Spleen (tissue), 13 donors: ENCODE measurements at regions of chr15 and their contacts with region 1.

Region 1: GRCh38 chr15:50876989-50877360 is 31.5 kb upstream of the AP4E1 start:
- DNase-seq: no peak
- H3K4me3 ChIP-seq: peak overlapping the region in 6 of 8 donors; percentile 12 to 61 (median 24)
- H3K27ac ChIP-seq: peak overlapping the region in 2 of 8 donors; percentile 21 to 30
- H3K4me1 ChIP-seq: peaks cover 0 to 68% (median 36%) of the 10 kb centered on the region in 6 donors
- H3K27me3 ChIP-seq: no peaks in the 10 kb centered on the region
- CTCF ChIP-seq: peak; percentile 83 to 97 (median 94)
- POLR2A ChIP-seq: no peak

Region 2: GRCh38 chr15:50390554-50391287 is 486.3 kb before region 1 on chr15:
- intact Hi-C with region 1: no loop called
- DNase-seq: no peak
- H3K4me3 ChIP-seq: no peak overlapping the region
- H3K27ac ChIP-seq: no peak overlapping the region
- H3K4me1 ChIP-seq: peaks cover 0 to 6% (median 2%) of the 10 kb centered on the region in 6 donors
- H3K27me3 ChIP-seq: no peaks in the 10 kb centered on the region
- CTCF ChIP-seq: no peak
- POLR2A ChIP-seq: no peak

Region 3: DNA sequence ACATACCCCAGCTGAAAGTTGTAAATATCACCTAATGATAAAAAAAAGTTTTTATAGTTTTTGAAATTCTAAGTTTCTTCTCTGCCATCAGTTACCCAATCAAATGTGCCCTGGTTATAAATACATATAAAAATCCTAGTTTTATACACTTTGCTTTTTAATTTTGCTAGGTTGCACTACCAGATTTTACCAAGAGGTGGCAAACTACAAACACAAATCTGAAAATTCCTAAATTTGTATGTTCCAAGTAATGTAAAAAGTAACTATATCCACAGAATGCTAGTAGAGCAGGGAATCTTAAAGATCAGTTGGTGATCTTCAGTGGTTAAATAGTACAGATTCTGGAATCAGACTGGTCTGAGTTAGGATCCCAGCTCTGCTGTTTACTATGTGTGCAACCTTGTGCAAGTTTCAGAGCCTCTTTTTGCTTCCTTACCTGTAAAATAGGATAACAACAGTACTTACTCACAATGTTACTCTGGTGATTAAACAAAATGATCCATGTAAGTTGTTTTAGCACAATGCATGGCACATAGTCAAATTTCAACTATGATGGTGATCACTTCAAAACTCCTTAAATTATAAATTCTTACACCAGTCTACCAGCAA is 201.3 kb before region 1 on chr15:
- intact Hi-C with region 1: loop called (anchors 5 kb)
- DNase-seq: no peak
- H3K4me3 ChIP-seq: no peak overlapping the region
- H3K27ac ChIP-seq: peak overlapping the region in 1 of 8 donors; percentile 4
- H3K4me1 ChIP-seq: peaks cover 0 to 74% (median 27%) of the 10 kb centered on the region in 6 donors
- H3K27me3 ChIP-seq: no peaks in the 10 kb centered on the region
- CTCF ChIP-seq: peak; percentile 62 to 82 (median 69)
- POLR2A ChIP-seq: no peak

Region 4: DNA sequence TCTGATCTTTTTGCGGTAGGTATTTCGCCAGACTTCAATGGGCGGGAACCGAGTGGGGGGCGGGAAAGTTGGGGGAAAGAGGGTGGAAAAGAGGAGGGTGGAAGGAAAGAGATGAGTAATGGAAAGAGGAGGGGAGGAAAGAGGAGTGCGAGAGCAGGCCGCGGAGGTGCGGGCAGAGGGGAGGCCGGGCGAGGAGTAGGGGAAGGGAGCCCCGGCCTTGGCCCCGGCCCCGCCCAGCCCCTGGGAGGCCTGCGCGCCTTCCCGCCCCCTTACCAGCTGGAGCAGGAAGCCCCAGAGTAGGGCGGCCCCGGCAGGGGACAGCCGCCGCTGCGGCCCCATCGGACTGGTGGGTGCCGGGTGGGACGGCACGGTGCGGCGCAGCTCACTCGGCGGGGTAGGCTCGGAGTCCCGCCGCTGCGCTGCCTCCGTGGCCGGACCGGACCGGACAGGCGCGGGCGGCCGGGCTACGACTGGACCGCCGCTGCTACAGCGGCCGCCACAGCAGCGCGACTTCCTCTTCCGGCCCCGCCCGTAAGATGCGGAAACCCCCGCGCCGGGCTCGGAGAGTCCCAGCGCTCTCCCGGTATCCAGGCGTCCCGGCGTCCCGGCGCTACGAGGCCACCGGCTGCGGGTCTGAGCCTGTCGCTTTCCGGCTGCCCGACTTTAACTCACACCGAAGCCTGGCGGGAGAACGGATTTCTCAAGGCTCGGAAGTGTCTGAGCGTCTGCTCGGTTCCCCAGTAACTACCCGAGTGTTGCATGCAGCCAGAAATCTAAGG is 111.6 kb before region 1 on chr15 and contains the start of gene SPPL2A:
- intact Hi-C with region 1: loop called (anchors 10 kb)
- DNase-seq: peak; percentile 97
- H3K4me3 ChIP-seq: peak within 1 kb of the TSS; percentile 58 to 95 (median 84)
- H3K27ac ChIP-seq: peak within 1 kb of the TSS; percentile 96 to 99 (median 98)
- H3K4me1 ChIP-seq: peaks cover 11 to 59% (median 35%) of the 10 kb centered on the region in 6 donors
- H3K27me3 ChIP-seq: no peaks in the 10 kb centered on the region
- CTCF ChIP-seq: peak in 2 of 11 experiments; percentile 8 to 20
- POLR2A ChIP-seq: peak; percentile 9 to 83 (median 10)
- total RNA-seq, gene SPPL2A: 92.6 to 425 (median 122) TPM

Region 5: DNA sequence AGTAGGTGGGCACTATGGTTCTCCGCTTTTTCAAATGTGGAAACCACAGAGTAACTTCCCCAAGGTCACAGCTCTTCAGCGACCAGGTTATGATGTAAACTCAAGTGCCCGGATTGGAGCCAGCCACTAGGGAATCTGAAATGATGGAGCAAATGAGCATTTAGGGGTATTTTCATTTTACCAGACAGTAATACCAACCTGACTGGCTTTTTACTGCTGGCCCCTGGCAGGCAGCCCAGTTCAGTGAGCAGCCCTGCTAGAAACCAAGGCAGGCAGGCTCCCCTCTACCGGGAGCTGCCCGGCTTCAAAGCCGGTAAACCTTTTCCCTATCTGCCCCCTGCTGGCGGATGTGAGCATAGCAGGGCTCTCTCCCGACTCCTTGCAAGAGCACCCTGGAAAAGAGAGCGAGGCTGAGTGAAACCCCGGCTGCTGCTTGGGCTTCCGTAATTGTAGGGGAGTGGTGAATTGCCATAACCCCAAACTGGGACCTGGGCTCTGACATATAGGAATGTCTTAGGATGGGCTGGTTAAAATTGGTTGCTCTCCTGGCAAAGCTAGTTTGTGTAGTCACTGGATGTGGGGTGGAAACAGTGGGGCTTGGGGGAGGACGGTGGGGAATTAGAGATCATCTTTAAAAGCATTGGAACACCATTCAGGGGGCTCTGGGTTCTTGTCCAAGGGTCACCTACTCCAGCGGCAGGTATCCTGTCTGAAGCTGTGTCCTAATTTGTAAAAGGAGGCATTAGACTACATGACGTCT is 315.7 kb after region 1 on chr15:
- intact Hi-C with region 1: no loop called
- DNase-seq: peak; percentile 93
- H3K4me3 ChIP-seq: peak overlapping the region in 1 of 8 donors; percentile 23
- H3K27ac ChIP-seq: peak overlapping the region in 7 of 8 donors; percentile 15 to 79 (median 71)
- H3K4me1 ChIP-seq: peaks cover 0 to 60% (median 39%) of the 10 kb centered on the region in 6 donors
- H3K27me3 ChIP-seq: peaks cover 0 to 39% (median 5%) of the 10 kb centered on the region in 7 donors
- CTCF ChIP-seq: peak; percentile 79 to 97 (median 94)
- POLR2A ChIP-seq: no peak